ENCODE measurements at regions of chr2 and their contacts with region 1.

Region 1: DNA sequence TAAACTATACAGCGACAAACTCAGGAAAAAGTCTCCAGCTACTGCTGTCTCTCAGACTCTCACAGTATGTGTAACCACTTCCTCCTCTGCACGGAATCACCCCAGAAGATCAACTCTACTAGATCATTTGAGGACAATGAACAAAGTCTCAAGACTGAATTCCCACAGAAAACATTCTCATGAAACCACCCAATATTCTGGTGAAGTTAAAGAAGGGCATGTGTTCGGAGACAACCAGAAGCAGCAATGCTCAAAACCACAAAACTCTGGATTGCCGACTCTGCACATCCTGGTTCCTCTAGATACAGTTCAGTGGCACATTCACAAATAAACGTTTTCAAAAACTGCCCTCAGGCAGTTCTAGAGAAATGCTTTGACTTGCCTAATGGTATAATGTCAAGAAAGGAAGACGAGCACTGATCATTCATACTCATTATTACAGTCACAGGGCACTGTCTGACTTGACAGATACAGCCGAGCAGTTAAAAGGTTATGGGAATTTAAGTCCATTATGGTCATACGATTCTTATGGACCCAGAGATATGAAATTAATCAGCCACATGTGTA is 91.9 kb upstream of the STK17B start:
- DNase-seq: peak in 6 of 9 experiments; percentile 39 to 87 (median 58)
- ATAC-seq: peak; percentile 82
- H3K4me3 ChIP-seq: peak overlapping the region; percentile 3 to 12
- H3K4me3 Mint-ChIP-seq: peak overlapping the region; percentile 72
- H3K27ac ChIP-seq: peak overlapping the region; percentile 27 to 61
- H3K27ac Mint-ChIP-seq: peak overlapping the region; percentile 93
- H3K4me1 ChIP-seq: peaks cover 72% of the 10 kb centered on the region
- H3K4me1 Mint-ChIP-seq: peaks cover 78% of the 10 kb centered on the region
- H3K27me3 ChIP-seq: no peaks in the 10 kb centered on the region
- H3K27me3 Mint-ChIP-seq: no peaks in the 10 kb centered on the region
- CTCF ChIP-seq: no peak

Region 2: GRCh38 chr2:196247114-196247975 is 15.9 kb before region 1 on chr2:
- CTCF ChIA-PET with region 1: interaction called, 4 read pairs
- POLR2A ChIA-PET with region 1: interaction called, 12 read pairs
- intact Hi-C with region 1: loop called (anchors 1 to 2 kb)
- DNase-seq: no peak
- ATAC-seq: no peak
- H3K4me3 ChIP-seq: no peak overlapping the region
- H3K4me3 Mint-ChIP-seq: no peak overlapping the region
- H3K27ac ChIP-seq: no peak overlapping the region
- H3K27ac Mint-ChIP-seq: peak overlapping the region; percentile 69
- H3K4me1 ChIP-seq: peaks cover 48% of the 10 kb centered on the region
- H3K4me1 Mint-ChIP-seq: peaks cover 63% of the 10 kb centered on the region
- H3K27me3 ChIP-seq: no peaks in the 10 kb centered on the region
- H3K27me3 Mint-ChIP-seq: no peaks in the 10 kb centered on the region
- CTCF ChIP-seq: no peak